H1 (cell line): ENCODE measurements at regions of chr2 and their contacts with region 1.

Region 1: DNA sequence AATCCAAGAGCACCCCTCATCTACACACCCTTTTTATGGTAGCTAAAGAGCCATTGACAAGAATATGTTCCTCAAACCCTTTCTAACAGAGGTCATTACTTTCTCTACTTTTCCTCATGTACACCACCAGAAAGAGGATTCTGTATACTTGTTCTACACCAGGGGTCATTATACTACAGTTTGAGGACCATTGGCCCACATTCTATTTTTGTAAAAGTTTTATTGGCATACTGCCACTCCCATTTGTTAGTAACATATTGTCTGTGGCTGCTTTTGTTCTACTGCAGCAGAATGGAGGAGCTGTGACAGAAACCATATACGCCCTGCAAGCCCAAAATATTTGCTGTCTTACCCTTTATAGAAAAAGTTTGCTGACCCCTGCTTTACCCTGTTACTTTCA is 14.3 kb downstream of the HTR2B start:
- DNase-seq: no peak
- H3K4me3 ChIP-seq: no peak overlapping the region
- H3K27ac ChIP-seq: no peak overlapping the region
- H3K4me1 ChIP-seq: peaks cover 0 to 3% (median 2%) of the 10 kb centered on the region in 4 experiments; a peak in 5 of 7 replicates
- H3K27me3 ChIP-seq: no peaks in the 10 kb centered on the region
- CTCF ChIP-seq: no peak
- EP300 ChIP-seq: no peak
- POLR2A ChIP-seq: no peak
- RAD21 ChIP-seq: no peak

Region 2: DNA sequence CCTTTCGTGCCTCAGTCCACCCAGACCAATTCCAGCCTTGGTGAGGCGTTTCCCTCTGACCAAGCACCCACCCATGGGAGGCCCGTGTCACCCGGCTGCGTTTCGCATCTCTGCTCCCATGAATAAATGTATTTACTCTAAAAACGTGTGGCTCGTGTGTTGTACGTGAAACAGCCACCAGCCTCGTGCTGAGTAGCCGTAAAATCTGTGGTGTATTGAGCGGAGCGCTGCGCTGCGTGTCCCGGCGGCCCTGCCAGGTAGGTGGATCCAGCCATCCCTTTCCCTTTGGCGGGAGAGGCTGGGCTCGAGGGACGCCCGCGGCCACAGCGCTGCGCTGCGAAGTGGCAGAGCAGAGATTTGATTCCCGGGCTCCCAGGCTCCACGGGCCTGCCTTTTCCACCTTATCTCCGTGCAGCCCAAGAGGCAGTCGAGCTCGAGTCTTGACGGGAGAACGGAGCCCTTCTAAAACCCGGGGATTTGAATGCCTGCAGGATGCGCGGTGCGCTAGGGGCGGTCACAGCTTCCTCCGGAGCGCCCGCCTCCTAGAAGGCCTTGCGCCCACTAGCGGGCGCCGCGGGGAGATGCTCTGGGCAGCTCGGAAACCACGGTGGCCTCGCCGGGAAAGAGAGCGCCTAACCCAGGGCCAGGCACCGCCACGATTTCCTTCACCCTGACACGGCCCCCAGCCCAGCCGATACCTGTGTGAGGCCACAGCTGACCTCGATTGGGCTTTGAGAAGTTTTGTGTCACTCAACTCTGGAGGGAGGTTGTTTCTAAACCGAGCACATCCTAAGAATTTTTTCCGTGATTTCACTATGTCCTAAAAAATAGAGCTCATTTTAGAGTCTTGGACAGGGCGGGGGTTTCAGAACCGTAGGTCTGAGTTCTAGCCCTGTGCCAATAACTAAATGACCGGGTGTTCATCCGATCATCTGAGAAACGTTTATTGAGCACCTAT is 57.8 kb before region 1 on chr2:
- CTCF ChIA-PET with region 1: no interaction called
- POLR2A ChIA-PET with region 1: no interaction called
- DNase-seq: peak in 1 of 2 experiments; percentile 90
- H3K4me3 ChIP-seq: peak overlapping the region; percentile 36 to 59 (median 50)
- H3K27ac ChIP-seq: no peak overlapping the region
- H3K4me1 ChIP-seq: peaks cover 3 to 7% (median 5%) of the 10 kb centered on the region in 4 experiments
- H3K27me3 ChIP-seq: peaks cover 0 to 35% (median 17%) of the 10 kb centered on the region in 4 experiments; a peak in 6 of 7 replicates
- CTCF ChIP-seq: peak; percentile 77 to 97 (median 87)
- EP300 ChIP-seq: no peak
- POLR2A ChIP-seq: no peak
- RAD21 ChIP-seq: peak; percentile 37 to 68

Region 3: DNA sequence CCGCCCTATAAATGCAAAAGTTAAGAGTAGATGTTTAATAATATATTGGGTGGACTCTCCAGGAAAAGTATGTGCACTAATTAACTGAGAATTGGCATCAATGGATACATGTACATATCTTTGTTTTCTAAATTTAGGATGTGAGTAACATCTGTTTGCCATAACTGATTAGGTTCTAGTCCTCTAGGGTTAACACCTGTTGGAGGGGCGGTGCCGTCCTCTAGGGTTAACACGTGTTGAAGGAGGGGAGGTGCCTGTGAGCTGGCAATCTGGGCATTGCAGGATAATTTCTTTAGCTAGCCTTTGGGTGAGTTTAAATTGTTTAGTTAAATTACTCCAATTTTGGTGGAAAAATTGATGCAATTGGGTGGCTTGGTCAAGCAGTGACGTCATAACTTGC is 16.6 kb before region 1 on chr2:
- CTCF ChIA-PET with region 1: no interaction called
- POLR2A ChIA-PET with region 1: no interaction called
- DNase-seq: no peak
- H3K4me3 ChIP-seq: no peak overlapping the region
- H3K27ac ChIP-seq: no peak overlapping the region
- H3K4me1 ChIP-seq: no peaks in the 10 kb centered on the region
- H3K27me3 ChIP-seq: no peaks in the 10 kb centered on the region
- CTCF ChIP-seq: no peak
- EP300 ChIP-seq: no peak
- POLR2A ChIP-seq: no peak
- RAD21 ChIP-seq: no peak

Region 4: GRCh38 chr2:231128541-231128940 is 18.0 kb after region 1 on chr2:
- CTCF ChIA-PET with region 1: interaction called, 14 read pairs
- POLR2A ChIA-PET with region 1: interaction called, 4 read pairs
- DNase-seq: no peak
- H3K4me3 ChIP-seq: no peak overlapping the region
- H3K27ac ChIP-seq: no peak overlapping the region
- H3K4me1 ChIP-seq: peaks cover 0 to 7% (median 1%) of the 10 kb centered on the region in 4 experiments; a peak in 2 of 7 replicates
- H3K27me3 ChIP-seq: no peaks in the 10 kb centered on the region
- CTCF ChIP-seq: no peak
- EP300 ChIP-seq: no peak
- POLR2A ChIP-seq: no peak
- RAD21 ChIP-seq: no peak